SK-N-SH (cell line): ENCODE measurements at regions of chr12 and their contacts with region 1.

Region 1: DNA sequence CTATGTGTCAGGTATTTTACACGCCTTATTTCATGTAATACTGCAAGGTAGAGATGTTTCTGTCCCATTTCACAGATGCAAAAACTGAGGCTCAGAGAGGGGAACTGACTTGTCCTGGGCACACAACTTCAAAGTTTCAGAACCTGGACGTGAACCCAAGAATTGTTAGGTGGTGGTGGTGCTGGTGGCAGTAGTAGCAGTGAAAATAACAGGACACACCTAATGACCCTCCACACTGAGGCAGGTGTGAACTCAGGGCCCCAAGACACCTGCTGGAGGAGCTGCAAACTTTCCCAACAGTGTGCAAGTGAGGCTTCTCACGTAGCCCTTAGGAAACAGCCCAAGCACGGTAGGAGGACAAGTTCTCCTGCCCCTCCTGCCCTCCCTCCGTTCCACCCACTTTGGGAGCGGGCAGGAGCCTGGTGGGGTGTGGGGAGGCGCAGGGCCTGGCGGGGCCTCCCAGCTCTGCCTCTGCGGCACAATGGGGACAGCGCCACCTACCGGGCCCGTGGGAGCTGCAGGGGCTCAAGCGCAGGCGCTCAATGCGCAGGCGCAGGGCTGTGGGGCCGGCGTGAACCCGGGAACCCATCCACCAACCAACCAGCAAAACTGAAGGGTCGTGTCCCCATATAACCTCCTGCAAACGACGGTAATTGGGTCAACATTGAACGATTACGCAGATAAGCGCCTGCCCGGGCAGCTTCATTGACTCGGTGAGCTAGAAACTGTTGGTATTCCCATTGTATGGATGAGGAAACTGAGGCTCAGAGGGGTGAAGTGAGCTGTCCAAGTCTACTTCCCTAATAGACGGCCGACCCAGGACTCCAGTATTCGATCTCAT is 12.0 kb upstream of the TRPV4 start:
- DNase-seq: peak; percentile 96
- H3K4me3 ChIP-seq: peak overlapping the region; percentile 35 to 36; a peak in 3 of 4 replicates
- H3K27ac ChIP-seq: no peak overlapping the region
- H3K4me1 ChIP-seq: peaks cover 0 to 3% of the 10 kb centered on the region in 2 experiments; a peak in 1 of 4 replicates
- H3K27me3 ChIP-seq: no peaks in the 10 kb centered on the region
- CTCF ChIP-seq: peak; percentile 98
- EP300 ChIP-seq: no peak
- RAD21 ChIP-seq: peak; percentile 86

Region 2: GRCh38 chr12:109428037-109428629 is 417.1 kb before region 1 on chr12:
- CTCF ChIA-PET with region 1: interaction called, 14 read pairs
- POLR2A ChIA-PET with region 1: no interaction called
- DNase-seq: peak; percentile 78
- H3K4me3 ChIP-seq: peak overlapping the region in 1 of 2 experiments; percentile 28; a peak in 1 of 4 replicates
- H3K27ac ChIP-seq: no peak overlapping the region
- H3K4me1 ChIP-seq: no peaks in the 10 kb centered on the region
- H3K27me3 ChIP-seq: no peaks in the 10 kb centered on the region
- CTCF ChIP-seq: peak; percentile 98
- EP300 ChIP-seq: no peak
- RAD21 ChIP-seq: peak; percentile 80

Region 3: GRCh38 chr12:109639151-109639872 is 205.9 kb before region 1 on chr12:
- CTCF ChIA-PET with region 1: no interaction called
- POLR2A ChIA-PET with region 1: no interaction called
- DNase-seq: no peak
- H3K4me3 ChIP-seq: no peak overlapping the region
- H3K27ac ChIP-seq: no peak overlapping the region
- H3K4me1 ChIP-seq: peaks cover 0 to 14% of the 10 kb centered on the region in 2 experiments; a peak in 1 of 4 replicates
- H3K27me3 ChIP-seq: no peaks in the 10 kb centered on the region
- CTCF ChIP-seq: no peak
- EP300 ChIP-seq: no peak
- RAD21 ChIP-seq: no peak

Region 4: GRCh38 chr12:109797905-109798669 is 47.1 kb before region 1 on chr12:
- CTCF ChIA-PET with region 1: interaction called, 89 read pairs
- POLR2A ChIA-PET with region 1: interaction called, 3 read pairs
- DNase-seq: peak; percentile 56
- H3K4me3 ChIP-seq: no peak overlapping the region
- H3K27ac ChIP-seq: no peak overlapping the region
- H3K4me1 ChIP-seq: no peaks in the 10 kb centered on the region
- H3K27me3 ChIP-seq: no peaks in the 10 kb centered on the region
- CTCF ChIP-seq: peak; percentile 43
- EP300 ChIP-seq: no peak
- RAD21 ChIP-seq: peak; percentile 47

Region 5: GRCh38 chr12:109818905-109819500 is 26.2 kb before region 1 on chr12:
- CTCF ChIA-PET with region 1: interaction called, 11 read pairs
- POLR2A ChIA-PET with region 1: no interaction called
- DNase-seq: no peak
- H3K4me3 ChIP-seq: no peak overlapping the region
- H3K27ac ChIP-seq: no peak overlapping the region
- H3K4me1 ChIP-seq: peaks cover 0 to 2% of the 10 kb centered on the region in 2 experiments; a peak in 1 of 4 replicates
- H3K27me3 ChIP-seq: no peaks in the 10 kb centered on the region
- CTCF ChIP-seq: no peak
- EP300 ChIP-seq: no peak
- RAD21 ChIP-seq: no peak

Region 6: GRCh38 chr12:109833307-109834189 is 11.7 kb before region 1 on chr12 and contains the start of gene TRPV4:
- CTCF ChIA-PET with region 1: interaction called, 57 read pairs
- POLR2A ChIA-PET with region 1: no interaction called
- DNase-seq: peak; percentile 87
- H3K4me3 ChIP-seq: peak within 1 kb of the TSS; percentile 55 to 66
- H3K27ac ChIP-seq: no peak within 1 kb of the TSS
- H3K4me1 ChIP-seq: no peaks in the 10 kb centered on the region; a peak in 1 of 4 replicates
- H3K27me3 ChIP-seq: no peaks in the 10 kb centered on the region
- CTCF ChIP-seq: no peak
- EP300 ChIP-seq: no peak
- RAD21 ChIP-seq: no peak
- polyA plus RNA-seq, gene TRPV4: 5.2 and 5.4 TPM in 2 replicates

Region 7: GRCh38 chr12:109863847-109864712 is 18.9 kb after region 1 on chr12:
- CTCF ChIA-PET with region 1: interaction called, 30 read pairs
- POLR2A ChIA-PET with region 1: interaction called, 3 read pairs
- DNase-seq: no peak
- H3K4me3 ChIP-seq: no peak overlapping the region
- H3K27ac ChIP-seq: no peak overlapping the region
- H3K4me1 ChIP-seq: no peaks in the 10 kb centered on the region; a peak in 1 of 4 replicates
- H3K27me3 ChIP-seq: no peaks in the 10 kb centered on the region
- CTCF ChIP-seq: no peak
- EP300 ChIP-seq: no peak
- RAD21 ChIP-seq: no peak